Endothelial cell of umbilical vein (primary cell): ENCODE measurements at regions of chr17 and their contacts with region 1.

Region 1: DNA sequence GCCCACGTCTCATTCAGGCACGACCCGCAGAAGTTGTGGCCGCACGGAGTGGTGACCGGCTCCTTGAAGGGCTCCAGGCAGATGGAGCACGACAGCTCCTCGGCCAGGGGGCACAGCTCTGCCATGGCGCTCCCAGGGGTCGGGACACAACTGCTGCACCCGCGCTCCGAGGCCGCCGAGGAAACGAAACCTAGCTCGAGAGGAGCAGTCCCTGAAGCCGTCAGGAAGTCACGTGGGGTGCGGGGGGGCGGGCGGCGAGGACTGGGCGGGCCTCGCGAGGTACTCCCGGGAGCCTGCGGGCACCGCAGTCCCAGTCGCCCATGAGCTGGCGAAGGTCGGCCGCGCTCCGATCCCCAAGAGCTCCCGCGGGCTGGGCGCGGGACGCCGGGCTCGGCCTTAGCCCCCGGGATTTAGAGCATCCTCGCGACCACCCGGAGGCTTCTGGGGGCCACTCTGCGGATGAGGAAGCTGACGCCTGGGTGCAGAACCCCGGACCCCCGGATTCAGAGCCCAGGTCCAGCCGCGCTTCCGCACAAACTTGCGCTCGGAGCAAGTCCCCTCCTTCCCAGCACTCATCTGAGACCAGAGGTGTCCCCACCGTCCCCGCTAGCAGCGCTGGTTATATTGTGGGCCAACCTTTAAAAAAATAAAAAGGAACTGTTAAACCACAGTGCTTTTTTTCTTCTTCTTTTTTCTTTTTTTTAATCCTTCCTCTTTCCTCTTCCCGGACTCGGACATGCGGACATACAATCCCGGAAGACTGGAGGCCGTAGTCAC is at the start of gene TRIM25:
- DNase-seq: peak; percentile 90
- H3K4me3 ChIP-seq: peak within 1 kb of the TSS; percentile 79 to 95 (median 88)
- H3K27ac ChIP-seq: peak within 1 kb of the TSS; percentile 93
- H3K4me1 ChIP-seq: peaks cover 33% of the 10 kb centered on the region
- H3K27me3 ChIP-seq: no peaks in the 10 kb centered on the region
- CTCF ChIP-seq: no peak
- POLR2A ChIP-seq: peak; percentile 100
- total RNA-seq, gene TRIM25: 69.4 and 98.4 TPM in 2 replicates

Region 2: GRCh38 chr17:56833809-56834379 is 80.2 kb before region 1 on chr17 and contains the starts of genes C17orf67 and DGKE:
- CTCF ChIA-PET with region 1: interaction called, 7 read pairs
- POLR2A ChIA-PET with region 1: interaction called, 8 read pairs
- dilution Hi-C with region 1: no loop called
- intact Hi-C with region 1: loop called (anchors 1 kb)
- DNase-seq: peak; percentile 97
- H3K4me3 ChIP-seq: peak within 1 kb of the TSS; percentile 76 to 77 (median 77)
- H3K27ac ChIP-seq: peak within 1 kb of the TSS; percentile 83
- H3K4me1 ChIP-seq: peaks cover 45% of the 10 kb centered on the region
- H3K27me3 ChIP-seq: no peaks in the 10 kb centered on the region
- CTCF ChIP-seq: no peak
- POLR2A ChIP-seq: peak; percentile 56
- total RNA-seq, gene C17orf67: 5.6 and 5.8 TPM in 2 replicates
- total RNA-seq, gene DGKE: 20.3 and 22.9 TPM in 2 replicates

Region 3: GRCh38 chr17:56902355-56903083 is 11.5 kb before region 1 on chr17:
- CTCF ChIA-PET with region 1: no interaction called
- POLR2A ChIA-PET with region 1: interaction called, 11 read pairs
- dilution Hi-C with region 1: no loop called
- intact Hi-C with region 1: no loop called
- DNase-seq: peak; percentile 64
- H3K4me3 ChIP-seq: no peak overlapping the region
- H3K27ac ChIP-seq: peak overlapping the region; percentile 80
- H3K4me1 ChIP-seq: peaks cover 27% of the 10 kb centered on the region
- H3K27me3 ChIP-seq: no peaks in the 10 kb centered on the region
- CTCF ChIP-seq: no peak
- POLR2A ChIP-seq: no peak